CD8-positive, alpha-beta T cell (primary cell): ENCODE measurements at regions of chr10 and their contacts with region 1.

Region 1: DNA sequence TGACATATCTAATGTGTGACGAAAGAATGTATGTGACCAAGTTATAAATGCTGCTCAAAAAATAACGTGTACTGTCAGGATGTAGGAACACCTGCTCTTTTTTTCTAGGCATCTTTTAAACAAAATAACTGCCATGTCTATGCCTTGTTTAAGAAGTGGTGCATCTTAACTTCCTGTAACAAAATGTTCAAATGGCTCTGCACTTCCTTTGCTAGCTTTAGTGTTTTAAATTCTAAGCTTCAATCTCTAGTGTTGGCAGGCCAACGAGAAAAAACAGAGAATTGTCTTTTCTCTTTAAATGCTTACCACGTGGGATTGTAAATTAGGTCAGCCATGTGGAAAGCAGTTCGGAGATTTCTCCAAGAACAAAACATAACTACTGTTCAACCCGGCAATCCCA is 14.6 kb upstream of the PDSS1 start:
- DNase-seq: peak in 2 of 9 experiments; percentile 52 to 74
- ATAC-seq: peak; percentile 82
- H3K4me3 ChIP-seq: peak overlapping the region in 1 of 2 experiments; percentile 22
- H3K4me3 Mint-ChIP-seq: peak overlapping the region; percentile 35
- H3K27ac ChIP-seq: peak overlapping the region; percentile 56 to 61
- H3K27ac Mint-ChIP-seq: peak overlapping the region; percentile 92
- H3K4me1 ChIP-seq: peaks cover 36% of the 10 kb centered on the region
- H3K4me1 Mint-ChIP-seq: peaks cover 37% of the 10 kb centered on the region
- H3K27me3 ChIP-seq: no peaks in the 10 kb centered on the region
- H3K27me3 Mint-ChIP-seq: no peaks in the 10 kb centered on the region
- CTCF ChIP-seq: no peak

Region 2: GRCh38 chr10:26612151-26612915 is 70.6 kb before region 1 on chr10:
- CTCF ChIA-PET with region 1: no interaction called
- POLR2A ChIA-PET with region 1: no interaction called
- intact Hi-C with region 1: loop called in 1 of 2 experiments (anchors 5 kb)
- DNase-seq: no peak
- ATAC-seq: no peak
- H3K4me3 ChIP-seq: no peak overlapping the region
- H3K4me3 Mint-ChIP-seq: no peak overlapping the region
- H3K27ac ChIP-seq: no peak overlapping the region
- H3K27ac Mint-ChIP-seq: no peak overlapping the region
- H3K4me1 ChIP-seq: no peaks in the 10 kb centered on the region
- H3K4me1 Mint-ChIP-seq: no peaks in the 10 kb centered on the region
- H3K27me3 ChIP-seq: no peaks in the 10 kb centered on the region
- H3K27me3 Mint-ChIP-seq: no peaks in the 10 kb centered on the region
- CTCF ChIP-seq: no peak

Region 3: DNA sequence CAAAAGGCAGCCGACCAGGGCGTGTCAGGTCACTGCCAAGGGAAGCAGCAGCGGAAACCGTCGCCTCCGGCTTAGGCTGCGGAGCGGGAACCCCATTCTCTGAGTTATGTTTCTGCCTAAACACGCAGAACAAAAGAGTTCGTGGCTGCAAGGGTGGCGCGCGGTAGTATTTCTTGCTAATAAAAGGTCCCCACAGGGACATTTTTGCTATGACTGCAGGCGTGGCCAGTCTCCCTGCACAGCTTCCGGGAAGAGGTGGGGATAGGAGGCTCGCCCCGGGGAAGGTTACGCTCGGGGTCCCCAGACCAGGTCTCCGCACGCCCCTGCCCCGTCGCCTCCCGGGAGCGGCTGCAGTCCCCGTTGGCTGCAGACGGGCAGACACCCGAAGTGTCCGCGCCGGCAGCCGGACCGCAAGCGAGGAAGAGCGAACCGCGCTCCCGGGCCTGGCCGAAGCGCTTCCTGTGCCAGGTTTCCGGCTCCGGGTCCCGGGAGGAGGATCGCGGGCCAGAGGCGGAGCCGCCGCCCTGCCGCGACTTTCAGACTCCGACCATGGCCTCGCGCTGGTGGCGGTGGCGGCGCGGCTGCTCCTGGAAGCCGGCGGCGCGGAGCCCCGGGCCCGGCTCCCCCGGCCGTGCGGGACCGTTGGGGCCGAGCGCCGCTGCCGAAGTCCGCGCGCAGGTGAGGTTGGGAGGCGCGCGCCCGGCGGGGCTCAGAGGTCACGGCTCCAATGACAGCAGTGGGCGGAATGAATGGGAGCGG is 14.4 kb after region 1 on chr10 and contains the start of gene PDSS1:
- CTCF ChIA-PET with region 1: interaction called, 9 read pairs
- POLR2A ChIA-PET with region 1: interaction called, 4 read pairs
- intact Hi-C with region 1: loop called in 1 of 2 experiments (anchors 1 kb)
- DNase-seq: peak; percentile 23 to 82 (median 60)
- ATAC-seq: peak; percentile 73
- H3K4me3 ChIP-seq: peak within 1 kb of the TSS; percentile 85 to 92
- H3K4me3 Mint-ChIP-seq: peak within 1 kb of the TSS; percentile 94
- H3K27ac ChIP-seq: peak within 1 kb of the TSS; percentile 69 to 81
- H3K27ac Mint-ChIP-seq: peak within 1 kb of the TSS; percentile 93
- H3K4me1 ChIP-seq: peaks cover 18% of the 10 kb centered on the region
- H3K4me1 Mint-ChIP-seq: peaks cover 35% of the 10 kb centered on the region
- H3K27me3 ChIP-seq: no peaks in the 10 kb centered on the region
- H3K27me3 Mint-ChIP-seq: no peaks in the 10 kb centered on the region
- CTCF ChIP-seq: no peak
- total RNA-seq, gene PDSS1: 3.4 to 3.7 TPM